T-cell (primary cell): ENCODE measurements at regions of chr17 and their contacts with region 1.

Region 1: GRCh38 chr17:75456417-75457046 is at the start of gene TMEM94:
- DNase-seq: peak; percentile 75 to 96 (median 88)
- ATAC-seq: peak; percentile 94 to 99 (median 94)
- H3K4me3 ChIP-seq: peak within 1 kb of the TSS; percentile 96
- H3K4me3 Mint-ChIP-seq: peak within 1 kb of the TSS; percentile 89 to 94 (median 90)
- H3K27ac ChIP-seq: peak within 1 kb of the TSS; percentile 68
- H3K27ac Mint-ChIP-seq: peak within 1 kb of the TSS; percentile 91 to 95
- H3K4me1 ChIP-seq: peaks cover 13 to 18% of the 10 kb centered on the region in 2 experiments
- H3K4me1 Mint-ChIP-seq: peaks cover 32 to 41% (median 34%) of the 10 kb centered on the region in 3 donors
- H3K27me3 ChIP-seq: no peaks in the 10 kb centered on the region
- H3K27me3 Mint-ChIP-seq: no peaks in the 10 kb centered on the region
- total RNA-seq, gene TMEM94: 78.5 to 125 (median 105) TPM

Region 2: DNA sequence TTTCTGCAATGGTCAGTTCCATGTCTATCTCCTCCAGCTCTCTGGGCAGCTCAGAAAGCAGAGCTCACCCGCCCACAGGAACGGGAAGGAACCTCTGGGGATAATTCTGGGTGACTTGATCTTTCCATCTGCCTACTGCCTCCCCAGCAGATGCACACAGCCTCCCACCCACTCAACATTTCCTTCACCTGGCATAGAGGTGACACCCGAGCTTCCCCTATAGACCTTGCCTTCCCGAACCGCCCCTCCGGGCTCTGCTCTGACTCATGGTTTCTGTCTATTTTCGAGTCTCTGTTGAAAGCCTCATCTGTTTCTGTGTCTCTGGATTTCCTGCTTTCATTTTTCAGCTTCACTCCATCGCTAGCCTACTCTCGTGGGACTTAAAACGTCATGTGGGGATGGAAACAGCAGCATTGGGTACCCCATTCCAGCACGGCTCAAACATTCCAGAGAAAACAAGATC is 206.5 kb before region 1 on chr17:
- CTCF ChIA-PET with region 1: no interaction called
- POLR2A ChIA-PET with region 1: interaction called in 1 of 2 experiments, 11 read pairs
- DNase-seq: peak in 18 of 35 experiments; percentile 20 to 65 (median 34)
- ATAC-seq: peak; percentile 87 to 98 (median 96)
- H3K4me3 ChIP-seq: peak overlapping the region in 1 of 2 donors; percentile 7
- H3K4me3 Mint-ChIP-seq: peak overlapping the region; percentile 66 to 73 (median 73)
- H3K27ac ChIP-seq: peak overlapping the region; percentile 65
- H3K27ac Mint-ChIP-seq: peak overlapping the region; percentile 91 to 94
- H3K4me1 ChIP-seq: peaks cover 0 to 24% of the 10 kb centered on the region in 2 experiments
- H3K4me1 Mint-ChIP-seq: peaks cover 54 to 58% (median 57%) of the 10 kb centered on the region in 3 donors
- H3K27me3 ChIP-seq: no peaks in the 10 kb centered on the region
- H3K27me3 Mint-ChIP-seq: no peaks in the 10 kb centered on the region

Region 3: GRCh38 chr17:75476271-75476671 is 19.7 kb after region 1 on chr17:
- CTCF ChIA-PET with region 1: no interaction called
- POLR2A ChIA-PET with region 1: no interaction called
- DNase-seq: no peak
- ATAC-seq: no peak
- H3K4me3 ChIP-seq: no peak overlapping the region
- H3K4me3 Mint-ChIP-seq: no peak overlapping the region
- H3K27ac ChIP-seq: no peak overlapping the region
- H3K27ac Mint-ChIP-seq: no peak overlapping the region
- H3K4me1 ChIP-seq: no peaks in the 10 kb centered on the region
- H3K4me1 Mint-ChIP-seq: peaks cover 0 to 5% (median 4%) of the 10 kb centered on the region in 3 donors
- H3K27me3 ChIP-seq: no peaks in the 10 kb centered on the region
- H3K27me3 Mint-ChIP-seq: no peaks in the 10 kb centered on the region

Region 4: GRCh38 chr17:75515496-75516254 is 59.1 kb after region 1 on chr17 and contains the start of gene CASKIN2:
- CTCF ChIA-PET with region 1: interaction called in 1 of 2 experiments, 10 read pairs
- POLR2A ChIA-PET with region 1: no interaction called
- DNase-seq: peak; percentile 36 to 87 (median 66)
- ATAC-seq: peak; percentile 51 to 68 (median 60)
- H3K4me3 ChIP-seq: peak within 1 kb of the TSS; percentile 53 to 55
- H3K4me3 Mint-ChIP-seq: peak within 1 kb of the TSS; percentile 71 to 77 (median 75)
- H3K27ac ChIP-seq: no peak within 1 kb of the TSS
- H3K27ac Mint-ChIP-seq: peak within 1 kb of the TSS in 1 of 2 donors; percentile 15
- H3K4me1 ChIP-seq: peaks cover 21 to 47% of the 10 kb centered on the region in 2 experiments
- H3K4me1 Mint-ChIP-seq: peaks cover 21 to 28% (median 24%) of the 10 kb centered on the region in 3 donors
- H3K27me3 ChIP-seq: peaks cover 0 to 21% of the 10 kb centered on the region in 2 experiments
- H3K27me3 Mint-ChIP-seq: no peaks in the 10 kb centered on the region
- total RNA-seq, gene CASKIN2: 0.28 to 0.88 (median 0.85) TPM